Psoas muscle (tissue), 8 donors: ENCODE measurements at regions of chr6 and their contacts with region 1.

Region 1: DNA sequence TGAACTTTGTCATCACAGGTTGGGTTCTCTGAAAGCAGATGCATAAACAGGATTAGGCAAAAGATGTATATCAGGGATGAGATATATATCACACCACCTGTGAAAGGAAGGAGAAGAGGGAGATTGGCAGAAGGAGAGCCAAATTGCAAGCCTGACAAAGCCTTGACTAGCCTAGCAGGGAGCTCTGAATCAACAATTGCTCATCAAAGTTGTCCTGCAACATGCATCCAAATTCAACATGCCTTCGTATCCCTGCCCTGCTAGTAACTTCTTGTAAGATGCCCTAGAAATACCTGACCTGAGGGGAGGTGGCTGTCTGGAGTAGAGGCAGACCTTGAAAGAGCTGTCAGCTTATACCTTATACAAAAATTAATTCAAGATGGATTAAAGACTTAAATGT is 207.1 kb upstream of the HTR1E start:
- DNase-seq: no peak
- ATAC-seq: no peak
- H3K4me3 ChIP-seq: no peak overlapping the region
- H3K27ac ChIP-seq: no peak overlapping the region
- H3K4me1 ChIP-seq: no peaks in the 10 kb centered on the region
- H3K27me3 ChIP-seq: no peaks in the 10 kb centered on the region
- CTCF ChIP-seq: no peak

Region 2: DNA sequence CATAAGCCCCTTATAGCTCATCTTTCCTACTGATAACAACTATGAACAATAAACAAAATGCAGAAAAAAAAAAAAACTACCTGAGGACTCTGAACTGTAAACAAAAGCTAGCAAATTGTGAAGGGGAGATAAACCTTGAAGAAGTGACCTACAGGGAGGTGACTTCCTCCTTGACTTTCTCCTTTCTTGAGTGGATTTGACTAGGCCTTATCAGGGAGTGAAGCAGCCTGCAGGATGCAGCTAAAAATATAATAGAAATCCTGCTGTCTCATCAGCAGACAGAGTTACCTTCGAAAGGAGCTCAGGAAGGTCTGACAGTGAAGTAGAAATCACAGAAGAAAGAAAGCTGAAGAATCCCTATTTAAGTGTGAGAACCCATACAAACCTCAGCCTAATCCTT is 114.9 kb before region 1 on chr6:
- intact Hi-C with region 1: no loop called
- DNase-seq: no peak
- ATAC-seq: no peak
- H3K4me3 ChIP-seq: no peak overlapping the region
- H3K27ac ChIP-seq: no peak overlapping the region
- H3K4me1 ChIP-seq: no peaks in the 10 kb centered on the region
- H3K27me3 ChIP-seq: no peaks in the 10 kb centered on the region
- CTCF ChIP-seq: no peak

Region 3: GRCh38 chr6:86765211-86765610 is 35.0 kb after region 1 on chr6:
- intact Hi-C with region 1: loop called in 1 of 2 experiments (anchors 2 kb)
- DNase-seq: no peak
- ATAC-seq: no peak
- H3K4me3 ChIP-seq: no peak overlapping the region
- H3K27ac ChIP-seq: no peak overlapping the region
- H3K4me1 ChIP-seq: no peaks in the 10 kb centered on the region
- H3K27me3 ChIP-seq: no peaks in the 10 kb centered on the region
- CTCF ChIP-seq: no peak

Region 4: DNA sequence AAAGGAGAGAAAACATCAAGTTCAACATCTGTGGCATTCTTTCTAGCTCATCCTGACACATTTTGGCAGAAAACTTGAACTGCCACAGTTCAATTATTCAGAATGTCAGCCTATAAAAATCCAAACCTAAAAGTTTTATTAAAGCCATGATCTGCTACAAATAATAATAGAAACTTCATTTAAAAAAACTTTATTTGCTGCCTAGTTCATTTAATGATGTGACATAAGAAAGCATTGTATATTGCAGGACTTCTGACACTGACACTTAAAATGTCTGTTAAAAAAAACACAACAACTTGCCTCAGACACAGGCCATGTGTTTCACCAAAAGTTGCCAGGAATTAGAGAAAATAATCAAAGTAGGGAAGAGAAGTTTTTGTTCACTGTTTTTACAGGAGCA is 118.8 kb after region 1 on chr6:
- intact Hi-C with region 1: no loop called
- DNase-seq: no peak
- ATAC-seq: no peak
- H3K4me3 ChIP-seq: no peak overlapping the region
- H3K27ac ChIP-seq: no peak overlapping the region
- H3K4me1 ChIP-seq: no peaks in the 10 kb centered on the region
- H3K27me3 ChIP-seq: no peaks in the 10 kb centered on the region
- CTCF ChIP-seq: no peak

Region 5: GRCh38 chr6:87088076-87088475 is 357.9 kb after region 1 on chr6:
- intact Hi-C with region 1: no loop called
- DNase-seq: no peak
- ATAC-seq: no peak
- H3K4me3 ChIP-seq: no peak overlapping the region
- H3K27ac ChIP-seq: no peak overlapping the region
- H3K4me1 ChIP-seq: no peaks in the 10 kb centered on the region
- H3K27me3 ChIP-seq: peaks cover 0 to 4% (median 0%) of the 10 kb centered on the region in 3 donors
- CTCF ChIP-seq: no peak

Region 6: GRCh38 chr6:87436435-87436834 is 706.2 kb after region 1 on chr6:
- intact Hi-C with region 1: no loop called
- DNase-seq: no peak
- ATAC-seq: peak in 1 of 4 donors; percentile 43
- H3K4me3 ChIP-seq: no peak overlapping the region
- H3K27ac ChIP-seq: no peak overlapping the region
- H3K4me1 ChIP-seq: no peaks in the 10 kb centered on the region
- H3K27me3 ChIP-seq: no peaks in the 10 kb centered on the region
- CTCF ChIP-seq: no peak